ENCODE measurements at regions of chr10 and their contacts with region 1.

Region 1: GRCh38 chr10:110354322-110354766 is 49.6 kb upstream of the SMNDC1 start:
- DNase-seq: peak; percentile 92
- H3K4me3 Mint-ChIP-seq: peak overlapping the region; percentile 30
- H3K27ac Mint-ChIP-seq: peak overlapping the region; percentile 56
- H3K4me1 Mint-ChIP-seq: peaks cover 52% of the 10 kb centered on the region
- H3K27me3 Mint-ChIP-seq: no peaks in the 10 kb centered on the region
- CTCF ChIP-seq: peak; percentile 60

Region 2: GRCh38 chr10:110129490-110129889 is 224.9 kb before region 1 on chr10:
- CTCF ChIA-PET with region 1: no interaction called
- POLR2A ChIA-PET with region 1: no interaction called
- intact Hi-C with region 1: no loop called
- DNase-seq: no peak
- H3K4me3 Mint-ChIP-seq: no peak overlapping the region
- H3K27ac Mint-ChIP-seq: no peak overlapping the region
- H3K4me1 Mint-ChIP-seq: no peaks in the 10 kb centered on the region
- H3K27me3 Mint-ChIP-seq: no peaks in the 10 kb centered on the region
- CTCF ChIP-seq: no peak

Region 3: DNA sequence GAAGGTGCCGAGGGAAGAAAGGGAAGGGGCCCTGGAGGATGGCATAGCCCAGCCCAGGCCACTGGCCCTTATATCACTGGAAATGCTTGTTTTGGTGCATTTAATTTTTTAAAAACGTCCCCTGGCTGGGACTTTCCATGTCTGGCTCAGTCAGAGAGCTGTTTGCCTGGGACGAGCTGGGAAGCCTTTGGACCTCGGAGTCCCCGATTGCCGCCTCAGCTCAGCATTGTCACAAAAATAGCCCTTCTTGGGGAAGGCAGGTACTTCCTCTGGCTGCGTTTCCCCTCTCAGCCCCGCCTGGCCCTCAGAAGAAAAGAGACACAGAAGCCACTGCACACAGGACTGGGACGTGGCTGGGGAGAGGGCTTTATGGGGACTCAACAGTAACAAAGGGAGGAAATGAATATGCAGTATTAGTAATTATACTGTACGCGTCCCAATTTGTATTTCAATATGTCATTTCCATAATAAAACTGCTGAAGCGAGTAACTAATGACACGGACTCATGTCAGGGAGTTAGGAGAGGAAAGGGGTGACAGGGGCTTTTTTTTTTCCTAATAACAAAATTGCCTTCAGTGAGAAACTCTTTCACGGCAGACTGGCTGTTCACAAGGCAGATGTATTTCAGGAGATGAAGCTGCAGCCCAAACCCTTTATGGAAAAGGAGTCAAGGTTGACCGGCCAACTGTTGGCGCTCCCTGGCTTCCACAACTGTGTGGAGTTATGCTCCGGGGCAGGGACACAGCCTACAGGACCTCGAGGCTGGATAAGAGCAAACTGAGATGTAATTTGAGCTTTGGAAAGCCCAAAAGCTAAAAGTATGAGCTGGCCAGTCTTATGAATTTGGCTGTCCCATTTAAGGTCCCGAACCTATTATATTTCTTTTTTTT is 178.0 kb before region 1 on chr10:
- CTCF ChIA-PET with region 1: no interaction called
- POLR2A ChIA-PET with region 1: no interaction called
- intact Hi-C with region 1: no loop called
- DNase-seq: no peak
- H3K4me3 Mint-ChIP-seq: no peak overlapping the region
- H3K27ac Mint-ChIP-seq: no peak overlapping the region
- H3K4me1 Mint-ChIP-seq: peaks cover 12% of the 10 kb centered on the region
- H3K27me3 Mint-ChIP-seq: no peaks in the 10 kb centered on the region
- CTCF ChIP-seq: no peak

Region 4: DNA sequence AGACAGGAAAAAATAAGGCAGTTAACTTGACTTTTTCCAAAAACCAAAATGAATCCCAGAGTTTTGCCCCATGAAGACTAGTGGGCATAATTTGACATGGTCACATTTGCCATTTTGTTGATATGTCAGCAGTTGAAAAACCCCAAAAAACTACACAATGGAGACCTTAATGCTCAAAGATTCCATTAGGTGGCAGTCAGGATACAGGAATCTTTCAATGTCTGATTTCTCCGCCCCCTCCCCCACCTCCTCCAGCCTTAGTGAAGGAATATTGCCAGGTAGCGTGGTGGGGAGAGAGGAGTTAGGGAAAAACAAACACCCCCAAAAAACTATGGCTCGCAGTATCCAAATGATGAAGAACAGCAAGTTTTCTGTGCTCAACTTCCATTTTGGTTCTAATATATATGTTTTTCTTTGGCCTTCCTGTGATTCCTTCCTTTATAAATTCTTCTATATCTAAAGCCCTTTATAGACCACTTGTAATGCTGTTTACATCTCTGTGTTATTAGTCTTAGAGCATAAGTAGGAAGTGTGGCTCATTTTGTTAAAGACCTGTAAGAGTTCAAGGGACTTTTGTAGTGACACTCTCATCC is 42.9 kb before region 1 on chr10:
- CTCF ChIA-PET with region 1: interaction called, 6 read pairs
- POLR2A ChIA-PET with region 1: interaction called, 4 read pairs
- intact Hi-C with region 1: loop called (anchors 1 kb)
- DNase-seq: peak; percentile 77
- H3K4me3 Mint-ChIP-seq: no peak overlapping the region
- H3K27ac Mint-ChIP-seq: no peak overlapping the region
- H3K4me1 Mint-ChIP-seq: no peaks in the 10 kb centered on the region
- H3K27me3 Mint-ChIP-seq: no peaks in the 10 kb centered on the region
- CTCF ChIP-seq: peak; percentile 69

Region 5: GRCh38 chr10:110368002-110368401 is 13.7 kb after region 1 on chr10:
- CTCF ChIA-PET with region 1: interaction called, 12 read pairs
- POLR2A ChIA-PET with region 1: interaction called, 5 read pairs
- intact Hi-C with region 1: no loop called
- DNase-seq: no peak
- H3K4me3 Mint-ChIP-seq: no peak overlapping the region
- H3K27ac Mint-ChIP-seq: no peak overlapping the region
- H3K4me1 Mint-ChIP-seq: peaks cover 29% of the 10 kb centered on the region
- H3K27me3 Mint-ChIP-seq: no peaks in the 10 kb centered on the region
- CTCF ChIP-seq: no peak

Region 6: GRCh38 chr10:110414563-110415309 is 60.4 kb after region 1 on chr10:
- CTCF ChIA-PET with region 1: interaction called, 5 read pairs
- POLR2A ChIA-PET with region 1: interaction called, 21 read pairs
- intact Hi-C with region 1: loop called (anchors 1 kb)
- DNase-seq: peak; percentile 89
- H3K4me3 Mint-ChIP-seq: no peak overlapping the region
- H3K27ac Mint-ChIP-seq: peak overlapping the region; percentile 2
- H3K4me1 Mint-ChIP-seq: peaks cover 58% of the 10 kb centered on the region
- H3K27me3 Mint-ChIP-seq: no peaks in the 10 kb centered on the region
- CTCF ChIP-seq: no peak

Region 7: DNA sequence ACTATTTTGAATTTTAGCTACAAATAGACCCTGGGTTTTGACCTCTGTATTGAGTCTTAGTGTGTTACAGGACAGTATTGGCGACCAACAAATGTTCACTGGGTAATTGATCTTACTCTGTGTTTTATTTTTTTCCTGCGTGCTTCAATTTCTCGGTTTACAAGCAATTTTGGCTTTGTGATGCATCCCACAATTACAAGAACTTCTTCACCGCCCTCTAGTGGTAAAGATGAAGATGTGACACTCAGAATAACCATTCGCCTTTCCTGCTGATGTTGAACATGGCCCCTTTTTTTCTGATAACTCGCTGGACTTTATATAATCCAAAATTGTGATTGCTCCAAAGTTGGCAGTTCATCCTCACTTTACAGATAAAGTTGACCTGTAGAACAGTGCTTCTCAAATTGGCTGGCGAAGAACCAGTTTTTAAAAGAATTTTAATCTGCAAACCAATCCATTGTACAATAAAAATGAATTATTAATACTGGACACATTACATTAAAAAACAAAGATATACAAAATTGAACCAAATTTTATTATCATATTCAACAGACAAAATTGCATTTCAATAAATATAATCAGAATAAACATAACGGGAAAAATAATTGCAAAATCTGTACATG is 192.9 kb after region 1 on chr10:
- CTCF ChIA-PET with region 1: interaction called, 16 read pairs
- POLR2A ChIA-PET with region 1: no interaction called
- intact Hi-C with region 1: loop called (anchors 1 kb)
- DNase-seq: peak; percentile 68
- H3K4me3 Mint-ChIP-seq: no peak overlapping the region
- H3K27ac Mint-ChIP-seq: no peak overlapping the region
- H3K4me1 Mint-ChIP-seq: peaks cover 4% of the 10 kb centered on the region
- H3K27me3 Mint-ChIP-seq: no peaks in the 10 kb centered on the region
- CTCF ChIP-seq: peak; percentile 64